ENCODE measurements at regions of chr16 and their contacts with region 1.

Region 1: GRCh38 chr16:87461466-87461991 is 31.3 kb downstream of the ZCCHC14 start:
- DNase-seq: peak; percentile 93
- H3K4me3 ChIP-seq: peak overlapping the region; percentile 28; the same call in 1 of the 2 replicates
- H3K27ac ChIP-seq: 0 out of 2 replicates have a peak overlapping the region, but pooled peaks have one; percentile 16
- H3K4me1 ChIP-seq: peaks cover 65% of the 10 kb centered on the region
- H3K27me3 ChIP-seq: no peaks in the 10 kb centered on the region
- CTCF ChIP-seq: peak; percentile 66

Region 2: GRCh38 chr16:87407511-87408112 is 53.9 kb before region 1 on chr16:
- CTCF ChIA-PET with region 1: no interaction called
- POLR2A ChIA-PET with region 1: no interaction called
- intact Hi-C with region 1: loop called (anchors 5 kb)
- DNase-seq: peak; percentile 83 to 84
- H3K4me3 ChIP-seq: no peak overlapping the region
- H3K27ac ChIP-seq: no peak overlapping the region
- H3K4me1 ChIP-seq: no peaks in the 10 kb centered on the region
- H3K27me3 ChIP-seq: no peaks in the 10 kb centered on the region
- CTCF ChIP-seq: no peak

Region 3: DNA sequence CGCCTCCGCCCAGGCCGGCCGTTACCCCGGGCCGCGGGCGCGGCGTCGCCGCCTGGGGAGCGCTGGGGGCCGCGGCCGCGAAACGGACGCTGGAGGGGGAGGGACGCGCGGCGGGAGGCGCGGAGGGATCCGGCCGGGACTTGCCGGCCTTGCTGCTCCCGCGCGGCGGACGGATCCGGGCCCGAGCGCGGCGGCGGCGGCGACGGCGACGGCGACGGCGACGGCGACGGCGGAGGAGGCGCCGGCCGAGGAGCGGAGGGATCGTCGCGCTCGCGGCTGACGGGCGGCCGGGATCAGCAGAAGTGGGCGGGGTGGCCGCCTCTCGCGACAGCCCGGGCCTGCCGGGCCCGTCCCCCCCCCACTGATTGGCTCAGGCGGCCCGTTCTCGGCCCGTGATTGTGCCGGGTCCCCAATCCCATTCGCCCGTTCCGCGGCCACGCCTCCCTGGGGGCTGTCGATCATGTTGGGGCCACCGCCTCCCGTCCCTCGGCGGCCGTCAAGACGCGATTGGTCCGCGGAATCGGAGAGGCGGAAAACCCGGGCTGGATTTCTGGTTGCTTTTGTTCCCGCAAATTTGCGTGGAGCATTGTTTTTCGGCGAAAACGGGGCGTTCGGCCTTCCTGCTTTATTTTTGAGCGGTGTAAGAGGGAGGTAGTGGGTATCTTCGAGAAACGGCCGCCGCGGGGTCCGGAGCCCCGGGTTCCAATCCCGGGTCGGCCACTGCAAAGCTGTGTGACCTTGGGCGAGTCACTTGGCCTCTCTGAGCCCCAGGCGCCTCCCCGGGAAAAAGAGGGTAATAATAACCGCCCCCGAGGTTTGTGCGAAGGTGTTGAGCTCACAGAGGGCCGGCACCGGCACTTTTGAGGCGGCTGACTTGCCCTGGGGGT is 31.4 kb after region 1 on chr16 and contains the start of gene ZCCHC14:
- CTCF ChIA-PET with region 1: no interaction called
- POLR2A ChIA-PET with region 1: no interaction called
- intact Hi-C with region 1: loop called (anchors 1 kb)
- DNase-seq: peak; percentile 89 to 97
- H3K4me3 ChIP-seq: peak within 1 kb of the TSS; percentile 67
- H3K27ac ChIP-seq: no peak within 1 kb of the TSS
- H3K4me1 ChIP-seq: peaks cover 12% of the 10 kb centered on the region; the same call in 1 of the 2 replicates
- H3K27me3 ChIP-seq: no peaks in the 10 kb centered on the region
- CTCF ChIP-seq: no peak
- total RNA-seq, gene ZCCHC14: 17.9 and 19.2 TPM in 2 replicates

Region 4: GRCh38 chr16:87571136-87571867 is 109.8 kb after region 1 on chr16:
- CTCF ChIA-PET with region 1: interaction called, 3 read pairs
- POLR2A ChIA-PET with region 1: no interaction called
- intact Hi-C with region 1: loop called (anchors 10 kb)
- DNase-seq: peak; percentile 36 to 58
- H3K4me3 ChIP-seq: no peak overlapping the region
- H3K27ac ChIP-seq: no peak overlapping the region
- H3K4me1 ChIP-seq: no peaks in the 10 kb centered on the region
- H3K27me3 ChIP-seq: peaks cover 72% of the 10 kb centered on the region
- CTCF ChIP-seq: peak; percentile 63

Region 5: DNA sequence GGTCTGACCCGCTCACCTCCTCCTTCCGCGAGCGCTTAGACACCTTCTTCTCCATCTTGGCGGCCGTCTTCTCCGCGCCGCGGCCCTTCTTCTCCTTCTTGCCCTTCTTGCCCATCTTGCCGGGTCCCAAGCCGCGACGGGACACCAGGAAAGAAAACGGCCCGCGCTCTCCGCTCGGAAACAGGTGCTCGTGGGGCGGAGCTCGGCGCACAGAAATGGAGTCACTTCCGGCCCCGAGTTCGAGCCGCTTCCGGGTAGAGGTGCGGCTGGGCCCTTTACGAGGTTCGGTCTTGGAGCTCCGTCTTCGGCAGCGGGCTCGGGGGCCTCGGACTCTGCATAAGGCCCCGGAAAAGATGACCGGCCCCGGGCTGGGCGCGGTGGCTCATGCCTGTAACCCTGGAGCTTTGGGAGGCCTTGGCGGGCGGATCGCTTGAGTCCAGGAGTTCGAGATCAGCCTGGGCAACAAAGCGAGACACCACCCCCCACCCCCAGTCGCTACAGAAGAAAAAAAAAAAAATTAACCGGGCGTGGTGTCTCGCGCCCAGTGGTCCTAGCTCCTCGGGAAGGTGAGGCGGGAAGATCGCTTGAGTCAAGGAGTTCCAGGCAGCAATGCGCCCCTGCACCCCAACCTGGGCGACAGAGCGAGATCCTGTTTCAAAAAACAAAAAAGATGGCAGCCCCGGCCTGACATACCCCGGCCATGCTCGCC is 304.4 kb after region 1 on chr16 and contains the start of gene KLHDC4:
- CTCF ChIA-PET with region 1: no interaction called
- POLR2A ChIA-PET with region 1: interaction called, 28 read pairs
- intact Hi-C with region 1: no loop called
- DNase-seq: peak; percentile 78 to 82
- H3K4me3 ChIP-seq: peak within 1 kb of the TSS; percentile 90
- H3K27ac ChIP-seq: peak within 1 kb of the TSS; percentile 52
- H3K4me1 ChIP-seq: peaks cover 11% of the 10 kb centered on the region; the same call in 1 of the 2 replicates
- H3K27me3 ChIP-seq: no peaks in the 10 kb centered on the region
- CTCF ChIP-seq: no peak
- total RNA-seq, gene KLHDC4: 66.5 and 74.2 TPM in 2 replicates

Region 6: DNA sequence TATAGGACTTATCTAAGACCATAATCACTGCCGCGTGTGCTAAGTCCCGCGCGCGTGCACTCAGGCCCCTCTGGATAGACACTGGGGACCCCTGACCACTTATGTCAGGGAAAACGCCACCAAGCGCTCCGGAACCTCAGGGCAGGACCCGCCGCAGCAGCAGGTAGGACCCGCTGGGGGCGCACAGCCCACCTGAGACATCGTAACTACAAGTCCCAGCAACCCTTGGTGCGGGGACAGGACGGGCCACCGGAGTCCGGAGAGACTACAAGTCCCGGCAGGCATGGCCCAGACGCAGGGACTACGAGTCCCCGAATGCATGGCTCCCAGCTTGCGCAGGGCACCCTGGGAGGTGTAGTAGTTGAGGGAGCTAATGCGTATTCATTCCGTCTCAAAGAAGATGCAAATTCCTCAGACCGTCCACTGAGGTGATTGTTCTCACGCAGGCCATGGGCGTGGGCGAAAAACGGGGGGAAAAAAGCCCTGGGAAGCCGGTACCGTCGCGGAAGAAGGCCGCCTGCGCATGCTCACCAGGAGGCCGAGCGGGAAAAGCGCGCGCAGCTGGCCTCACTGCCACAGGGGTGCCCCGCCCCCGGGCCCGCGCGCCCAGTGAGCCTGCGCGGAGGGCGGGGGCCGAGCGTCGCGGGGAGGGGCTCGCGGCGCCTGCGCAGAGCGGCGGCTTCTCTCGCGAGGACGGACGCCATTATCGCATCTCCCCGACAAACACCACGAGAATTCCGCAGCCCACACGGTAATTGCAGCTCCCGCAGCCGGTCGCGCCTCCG is 489.4 kb after region 1 on chr16 and contains the start of gene BANP:
- CTCF ChIA-PET with region 1: no interaction called
- POLR2A ChIA-PET with region 1: no interaction called
- intact Hi-C with region 1: loop called (anchors 5 kb)
- DNase-seq: peak; percentile 98 to 99
- H3K4me3 ChIP-seq: peak within 1 kb of the TSS; percentile 96
- H3K27ac ChIP-seq: peak within 1 kb of the TSS; percentile 77
- H3K4me1 ChIP-seq: peaks cover 30% of the 10 kb centered on the region
- H3K27me3 ChIP-seq: no peaks in the 10 kb centered on the region
- CTCF ChIP-seq: peak; percentile 69
- total RNA-seq, gene BANP: 60.9 and 73.2 TPM in 2 replicates

Measured in PC-9 (cell line).